ENCODE measurements at regions of chr16 and their contacts with region 1.

Region 1: GRCh38 chr16:1971796-1972489 is at the start of gene TBL3:
- DNase-seq: peak; percentile 99
- ATAC-seq: peak; percentile 93
- H3K4me3 Mint-ChIP-seq: peak within 1 kb of the TSS; percentile 96
- H3K27ac Mint-ChIP-seq: peak within 1 kb of the TSS; percentile 99
- H3K4me1 Mint-ChIP-seq: peaks cover 13% of the 10 kb centered on the region
- H3K27me3 Mint-ChIP-seq: no peaks in the 10 kb centered on the region
- total RNA-seq, gene TBL3: 29.4 to 30.7 TPM

Region 2: GRCh38 chr16:1959269-1960049 is 12.5 kb before region 1 on chr16 and contains the start of gene NDUFB10:
- POLR2A ChIA-PET with region 1: interaction called, 50 read pairs
- DNase-seq: peak; percentile 96
- ATAC-seq: peak; percentile 84
- H3K4me3 Mint-ChIP-seq: peak within 1 kb of the TSS; percentile 97
- H3K27ac Mint-ChIP-seq: peak within 1 kb of the TSS; percentile 96
- H3K4me1 Mint-ChIP-seq: peaks cover 39% of the 10 kb centered on the region
- H3K27me3 Mint-ChIP-seq: no peaks in the 10 kb centered on the region
- total RNA-seq, gene NDUFB10: 108 to 115 TPM

Region 3: GRCh38 chr16:1991948-1992703 is 20.2 kb after region 1 on chr16:
- POLR2A ChIA-PET with region 1: interaction called, 15 read pairs
- DNase-seq: peak; percentile 96
- ATAC-seq: peak; percentile 76
- H3K4me3 Mint-ChIP-seq: peak overlapping the region; percentile 75
- H3K27ac Mint-ChIP-seq: no peak overlapping the region
- H3K4me1 Mint-ChIP-seq: peaks cover 20% of the 10 kb centered on the region
- H3K27me3 Mint-ChIP-seq: peaks cover 13% of the 10 kb centered on the region

Measured in activated naive CD8-positive, alpha-beta T cell treated with anti-CD3 and anti-CD28 coated beads, Interleukin-2, amount 10 ng/mL, durations not matched to agents 7 days and 5 days (primary cell).